ENCODE measurements at regions of chr9 and their contacts with region 1.

Region 1: DNA sequence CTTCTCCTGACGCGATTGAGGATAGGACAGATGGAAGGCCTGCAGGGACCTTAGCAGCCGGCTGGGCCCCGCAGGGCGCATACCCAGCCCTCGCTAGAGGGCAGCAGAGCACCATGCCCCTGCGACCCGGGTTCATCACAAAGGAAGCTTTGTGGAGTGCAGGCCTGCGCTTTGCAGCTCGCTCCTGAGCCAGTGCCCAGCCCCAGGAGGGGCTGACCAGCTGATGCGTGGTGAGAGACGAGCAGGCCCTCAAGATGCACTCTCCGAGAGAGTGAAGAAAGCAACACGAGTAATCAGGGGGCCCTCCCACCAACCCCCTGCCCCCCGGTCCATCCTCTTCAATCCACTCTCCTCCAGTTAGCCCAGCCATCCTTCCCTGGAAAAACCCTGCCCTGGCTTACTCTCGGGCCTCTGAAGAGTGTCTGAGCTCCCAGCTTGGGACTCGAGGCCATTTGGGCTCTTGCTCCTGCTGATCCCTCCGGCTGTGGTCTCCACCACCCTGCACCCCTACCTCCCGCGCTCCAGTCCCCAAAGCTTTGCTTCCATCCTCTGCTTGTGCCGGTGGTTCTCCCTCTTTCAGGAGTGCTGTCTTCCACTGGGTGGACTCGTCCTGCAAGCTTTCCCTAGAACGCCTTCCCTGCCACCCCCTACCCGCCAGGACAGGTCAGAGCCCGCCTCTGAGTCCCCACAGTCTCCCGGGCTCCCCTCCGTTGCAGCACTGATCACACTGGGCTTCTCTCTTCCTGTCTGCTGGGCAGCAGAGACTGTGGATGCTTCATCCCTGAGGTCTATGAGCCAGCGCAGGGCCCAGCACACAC is 9.1 kb upstream of the KIF12 start:
- DNase-seq: peak; percentile 51
- H3K4me3 ChIP-seq: no peak overlapping the region
- H3K27ac ChIP-seq: no peak overlapping the region
- H3K4me1 ChIP-seq: no peaks in the 10 kb centered on the region
- CTCF ChIP-seq: peak; percentile 83

Region 2: GRCh38 chr9:114155263-114155972 is 47.2 kb after region 1 on chr9 and contains the start of gene COL27A1:
- CTCF ChIA-PET with region 1: no interaction called
- POLR2A ChIA-PET with region 1: no interaction called
- intact Hi-C with region 1: loop called (anchors 10 kb)
- DNase-seq: peak; percentile 51
- H3K4me3 ChIP-seq: no peak within 1 kb of the TSS
- H3K27ac ChIP-seq: no peak within 1 kb of the TSS
- H3K4me1 ChIP-seq: no peaks in the 10 kb centered on the region
- CTCF ChIP-seq: peak; percentile 83
- total RNA-seq, gene COL27A1: not detected in 2 replicates

Region 3: DNA sequence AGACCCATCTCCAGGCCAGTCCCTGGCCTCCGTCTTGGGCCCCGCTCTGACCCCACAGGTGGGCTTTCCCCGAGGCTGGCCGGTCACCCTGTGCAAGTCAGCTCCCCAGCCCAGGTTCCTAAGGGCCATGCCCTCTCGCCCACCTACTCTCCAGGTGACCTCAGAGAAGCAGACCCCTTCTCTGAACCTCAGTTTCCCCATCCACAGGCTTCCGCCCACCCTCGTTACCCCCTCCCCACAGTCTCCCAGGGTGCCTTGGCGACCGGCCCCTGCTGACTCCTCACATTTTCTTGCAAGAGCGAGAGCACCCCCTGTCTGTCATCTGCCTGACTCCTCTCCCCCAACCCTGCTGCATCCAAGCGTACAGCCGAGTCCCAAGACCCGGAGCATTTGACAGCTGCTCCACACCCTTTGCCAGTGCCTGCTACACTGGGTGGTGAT is 163.4 kb after region 1 on chr9:
- CTCF ChIA-PET with region 1: no interaction called
- POLR2A ChIA-PET with region 1: no interaction called
- intact Hi-C with region 1: loop called (anchors 2 kb)
- DNase-seq: peak; percentile 44
- H3K4me3 ChIP-seq: no peak overlapping the region
- H3K27ac ChIP-seq: no peak overlapping the region
- H3K4me1 ChIP-seq: no peaks in the 10 kb centered on the region
- CTCF ChIP-seq: peak; percentile 72